HepG2 (cell line): ENCODE measurements at regions of chr16 and their contacts with region 1.

Region 1: DNA sequence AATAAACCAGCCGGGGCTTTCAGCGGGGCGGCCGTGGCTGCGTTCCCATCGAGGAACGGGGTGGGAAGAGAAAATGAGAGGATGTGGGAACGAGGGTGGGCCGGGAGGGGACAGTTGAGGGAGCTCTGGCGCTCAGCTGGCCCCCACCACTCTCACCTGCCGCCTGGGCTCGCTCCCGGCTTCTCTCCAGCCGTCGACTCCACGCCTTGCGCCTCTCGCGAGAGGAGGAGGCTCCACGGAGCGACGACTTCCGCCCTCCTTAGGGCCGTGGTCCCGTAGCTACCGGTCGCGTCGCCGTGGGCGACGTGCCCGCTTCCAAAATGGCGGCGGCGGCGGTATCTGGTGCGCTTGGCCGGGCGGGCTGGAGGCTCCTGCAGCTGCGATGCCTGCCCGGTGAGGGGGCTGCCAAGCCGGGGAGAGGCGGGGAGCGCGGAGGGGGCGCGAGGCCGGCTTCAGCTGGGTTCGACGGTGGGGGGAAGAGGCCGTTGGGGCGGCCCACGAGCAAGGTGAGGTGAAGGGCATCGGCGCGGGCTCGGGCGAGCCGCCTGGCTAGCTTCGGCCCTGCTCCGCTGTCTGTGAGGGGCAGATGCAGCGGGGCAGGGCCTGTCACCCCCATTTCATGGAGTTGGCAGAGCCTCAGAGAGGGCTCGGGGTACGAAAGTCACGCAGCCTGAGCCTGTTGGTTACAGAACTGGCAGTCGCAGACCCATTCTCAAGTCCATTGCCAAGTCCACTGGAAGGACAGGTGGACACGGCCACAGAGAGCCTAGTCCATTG is at the starts of genes CIAPIN1 and COQ9:
- DNase-seq: peak; percentile 92
- ATAC-seq: peak; percentile 99
- H3K4me3 ChIP-seq: peak within 1 kb of the TSS; percentile 81 to 95 (median 90)
- H3K27ac ChIP-seq: peak within 1 kb of the TSS; percentile 76
- H3K4me1 ChIP-seq: peaks cover 46% of the 10 kb centered on the region
- H3K27me3 ChIP-seq: no peaks in the 10 kb centered on the region; a peak in 1 of 5 replicates
- CTCF ChIP-seq: peak; percentile 41
- EP300 ChIP-seq: peak in 1 of 2 experiments; percentile 42; a peak in 1 of 4 replicates
- POLR2A ChIP-seq: peak; percentile 90 to 92; a peak in 3 of 4 replicates
- RAD21 ChIP-seq: peak; percentile 63; the same call in 1 of the 2 replicates
- total RNA-seq, gene CIAPIN1: 89.7 and 113 TPM in 2 replicates
- total RNA-seq, gene COQ9: 57.5 and 62.0 TPM in 2 replicates

Region 2: DNA sequence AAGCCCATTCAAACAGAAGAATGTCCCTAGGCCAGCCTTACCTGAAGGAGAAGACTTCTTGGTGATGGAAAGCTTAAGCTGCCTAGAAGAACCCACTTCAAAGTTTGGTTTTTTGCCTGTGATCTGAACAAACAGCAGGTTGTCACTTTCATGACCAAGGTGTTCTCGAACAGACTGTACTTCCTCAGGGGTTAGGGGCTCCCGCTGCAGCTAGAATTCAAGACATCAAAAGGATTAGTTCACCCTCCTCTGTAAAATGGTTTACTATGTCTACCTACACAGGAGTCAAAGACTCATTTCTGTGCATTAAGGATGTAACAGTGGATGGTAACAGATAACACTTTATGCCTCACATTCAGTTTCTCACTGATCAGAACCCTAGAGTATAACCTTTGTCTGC is 13.4 kb before region 1 on chr16:
- CTCF ChIA-PET with region 1: no interaction called
- POLR2A ChIA-PET with region 1: interaction called, 44 read pairs
- in situ Hi-C with region 1: no loop called
- intact Hi-C with region 1: no loop called
- DNase-seq: no peak
- ATAC-seq: no peak
- H3K4me3 ChIP-seq: no peak overlapping the region
- H3K27ac ChIP-seq: no peak overlapping the region
- H3K4me1 ChIP-seq: peaks cover 16% of the 10 kb centered on the region
- H3K27me3 ChIP-seq: no peaks in the 10 kb centered on the region
- CTCF ChIP-seq: no peak
- EP300 ChIP-seq: no peak
- POLR2A ChIP-seq: no peak
- RAD21 ChIP-seq: no peak

Region 3: DNA sequence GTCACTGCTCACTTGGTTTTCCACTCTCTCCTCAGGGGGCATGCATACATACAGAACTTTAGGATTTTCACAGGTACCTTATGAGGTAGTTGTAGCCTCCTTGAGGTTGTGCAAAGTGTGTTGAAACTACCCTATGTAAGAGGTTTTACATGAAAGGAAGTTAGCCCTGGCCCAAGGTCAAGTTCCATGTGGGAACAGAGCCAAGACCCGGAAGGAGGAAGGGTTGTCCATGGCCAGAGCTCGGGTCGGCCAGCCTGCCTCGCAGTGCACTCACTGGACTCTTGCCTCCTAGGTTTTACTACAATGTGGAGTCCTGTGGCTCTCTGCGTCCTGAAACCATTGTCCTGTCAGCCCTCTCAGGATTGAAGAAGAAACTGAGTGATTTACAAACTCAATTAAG is 23.3 kb after region 1 on chr16:
- CTCF ChIA-PET with region 1: no interaction called
- POLR2A ChIA-PET with region 1: interaction called, 46 read pairs
- in situ Hi-C with region 1: no loop called
- intact Hi-C with region 1: no loop called
- DNase-seq: no peak
- ATAC-seq: no peak
- H3K4me3 ChIP-seq: no peak overlapping the region
- H3K27ac ChIP-seq: peak overlapping the region; percentile 82
- H3K4me1 ChIP-seq: peaks cover 54% of the 10 kb centered on the region
- H3K27me3 ChIP-seq: no peaks in the 10 kb centered on the region
- CTCF ChIP-seq: no peak
- EP300 ChIP-seq: no peak
- POLR2A ChIP-seq: no peak
- RAD21 ChIP-seq: no peak

Region 4: DNA sequence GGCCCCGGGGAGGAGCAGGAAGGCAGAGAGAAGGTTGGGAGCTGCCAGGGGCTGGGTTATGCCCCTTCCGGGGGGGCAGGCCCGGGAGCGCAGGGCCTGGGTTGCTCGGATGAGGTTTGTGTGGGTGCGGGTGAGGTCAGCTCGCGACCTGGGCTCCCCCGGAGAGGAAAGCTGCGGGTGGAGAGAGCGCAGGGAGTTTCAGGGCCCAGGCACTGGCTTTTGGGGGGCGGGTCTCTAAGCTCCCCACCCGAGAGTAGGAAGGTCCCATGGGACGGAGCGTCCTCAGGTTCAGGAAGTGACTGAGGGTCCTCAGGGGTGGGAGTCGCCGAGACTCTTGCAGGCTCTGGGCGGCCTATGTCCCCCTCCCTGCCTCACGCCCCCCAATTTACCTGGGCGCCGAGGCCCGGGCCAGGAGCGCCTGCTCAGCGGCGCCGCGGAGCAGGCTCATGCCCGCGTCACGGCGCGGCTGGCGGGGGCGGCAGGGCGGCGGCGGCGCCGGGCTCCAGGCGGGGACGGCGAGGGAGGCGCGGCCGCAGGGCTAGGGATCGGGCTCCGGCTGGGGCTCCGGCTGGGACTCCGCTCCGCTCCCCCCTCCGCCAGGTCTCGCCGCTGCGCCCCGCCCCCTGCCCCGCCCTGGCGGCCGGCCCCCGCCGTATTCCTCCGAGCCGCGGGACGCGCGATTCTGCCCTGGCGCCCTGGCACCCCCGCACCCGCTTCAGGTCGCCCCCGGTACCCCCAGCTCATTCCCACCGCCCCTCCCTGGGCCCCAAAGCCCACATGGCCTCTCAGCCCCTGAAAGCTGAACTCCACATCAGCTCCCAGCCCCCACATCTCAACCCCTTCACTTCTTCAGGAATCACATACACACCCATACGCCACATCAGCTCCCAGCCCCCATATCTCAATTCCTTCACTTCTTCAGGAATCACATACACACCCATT is 38.8 kb after region 1 on chr16 and contains the start of gene DOK4:
- CTCF ChIA-PET with region 1: no interaction called
- POLR2A ChIA-PET with region 1: interaction called, 55 read pairs
- in situ Hi-C with region 1: no loop called
- intact Hi-C with region 1: no loop called
- DNase-seq: no peak
- ATAC-seq: peak; percentile 82
- H3K4me3 ChIP-seq: peak within 1 kb of the TSS; percentile 91 to 97 (median 96)
- H3K27ac ChIP-seq: peak within 1 kb of the TSS; percentile 56
- H3K4me1 ChIP-seq: peaks cover 66% of the 10 kb centered on the region
- H3K27me3 ChIP-seq: peaks cover 0 to 6% of the 10 kb centered on the region in 2 experiments; a peak in 1 of 5 replicates
- CTCF ChIP-seq: no peak
- EP300 ChIP-seq: no peak; a peak in 1 of 4 replicates
- POLR2A ChIP-seq: peak in 1 of 2 experiments; percentile 80; a peak in 2 of 4 replicates
- RAD21 ChIP-seq: no peak; the same call in 1 of the 2 replicates
- total RNA-seq, gene DOK4: 52.7 and 55.5 TPM in 2 replicates

Region 5: DNA sequence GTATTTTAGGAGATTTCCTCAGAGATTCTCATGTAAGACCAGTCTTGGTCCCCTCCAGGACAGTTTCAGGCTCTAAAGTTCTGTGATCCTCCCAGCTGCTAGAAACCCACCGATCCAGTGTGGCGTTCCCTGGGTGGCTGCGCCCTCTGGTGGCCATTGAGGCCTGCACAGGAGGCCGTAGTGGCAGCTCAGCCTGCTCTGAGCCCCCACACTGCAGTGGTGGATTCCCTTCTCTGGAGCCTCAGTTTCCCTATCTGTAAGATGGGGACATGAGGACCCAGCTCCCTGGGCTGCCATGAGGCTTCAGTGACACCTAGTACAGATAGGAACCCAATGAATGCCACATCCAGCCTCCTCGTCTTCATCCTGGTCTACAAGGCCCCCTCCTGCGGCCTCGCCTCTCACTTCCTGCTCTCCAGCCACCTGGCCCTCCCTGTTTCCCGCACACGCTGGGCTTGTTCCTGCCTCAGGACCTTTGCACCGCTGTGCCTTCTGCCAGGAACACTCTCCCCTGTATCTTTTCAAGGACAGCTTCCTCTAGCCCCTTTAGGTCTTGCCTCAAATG is 72.5 kb after region 1 on chr16:
- CTCF ChIA-PET with region 1: no interaction called
- POLR2A ChIA-PET with region 1: interaction called, 16 read pairs
- in situ Hi-C with region 1: no loop called
- intact Hi-C with region 1: no loop called
- DNase-seq: peak; percentile 73
- ATAC-seq: peak; percentile 91
- H3K4me3 ChIP-seq: no peak overlapping the region
- H3K27ac ChIP-seq: no peak overlapping the region
- H3K4me1 ChIP-seq: peaks cover 14% of the 10 kb centered on the region
- H3K27me3 ChIP-seq: no peaks in the 10 kb centered on the region
- CTCF ChIP-seq: peak; percentile 99
- EP300 ChIP-seq: no peak
- POLR2A ChIP-seq: no peak
- RAD21 ChIP-seq: peak; percentile 99